ENCODE measurements at regions of chr7 and their contacts with region 1.

Region 1: GRCh38 chr7:85030893-85031292 is 156.0 kb downstream of the SEMA3D start:
- DNase-seq: no peak
- ATAC-seq: no peak

Region 2: GRCh38 chr7:85000735-85001350 is 30.1 kb before region 1 on chr7:
- intact Hi-C with region 1: no loop called
- DNase-seq: no peak
- ATAC-seq: no peak

Region 3: GRCh38 chr7:85104432-85105205 is 73.7 kb after region 1 on chr7:
- intact Hi-C with region 1: no loop called
- DNase-seq: no peak
- ATAC-seq: peak; percentile 31

Region 4: DNA sequence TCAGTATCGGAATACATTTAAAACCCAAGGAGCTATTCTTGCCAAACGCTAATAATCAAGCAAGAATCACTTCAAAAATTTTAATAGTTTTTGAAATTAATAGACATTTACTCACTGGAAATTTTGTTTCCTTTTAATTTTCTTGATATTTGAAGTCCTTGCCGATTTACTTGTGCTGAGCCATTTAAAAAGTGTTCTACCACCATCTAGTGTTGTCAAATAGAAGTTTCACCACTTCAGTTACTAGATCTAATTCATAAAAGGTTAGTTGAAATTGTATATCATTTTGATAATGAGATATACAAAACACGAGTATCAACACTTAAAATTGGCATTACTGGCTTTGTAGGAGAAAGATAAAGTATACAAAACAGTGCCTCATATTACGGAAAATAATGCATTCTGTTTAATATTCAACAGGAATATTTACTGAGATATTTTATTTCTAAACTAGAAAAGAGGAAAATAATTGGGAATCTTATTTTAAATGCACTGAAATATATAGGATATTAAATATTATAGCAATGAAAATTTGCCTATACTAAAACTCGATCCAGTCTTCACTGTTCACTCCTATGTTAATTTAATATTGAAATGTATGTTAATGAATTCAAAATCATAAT is 820.8 kb after region 1 on chr7:
- intact Hi-C with region 1: loop called (anchors 5 kb)
- DNase-seq: no peak
- ATAC-seq: no peak

Measured in Right ventricle myocardium inferior (tissue), 1 donor.